ENCODE measurements at regions of chr20 and their contacts with region 1.

Region 1: GRCh38 chr20:20747298-20748085 is 35.0 kb upstream of the RALGAPA2 start:
- DNase-seq: no peak
- H3K4me3 ChIP-seq: no peak overlapping the region
- H3K27ac ChIP-seq: no peak overlapping the region
- H3K4me1 ChIP-seq: no peaks in the 10 kb centered on the region
- H3K27me3 ChIP-seq: no peaks in the 10 kb centered on the region
- CTCF ChIP-seq: no peak

Region 2: GRCh38 chr20:20699144-20699543 is 48.3 kb before region 1 on chr20:
- CTCF ChIA-PET with region 1: no interaction called
- dilution Hi-C with region 1: loop called (anchors 5 kb)
- in situ Hi-C with region 1: no loop called
- intact Hi-C with region 1: no loop called
- DNase-seq: no peak
- H3K4me3 ChIP-seq: no peak overlapping the region
- H3K27ac ChIP-seq: no peak overlapping the region
- H3K4me1 ChIP-seq: no peaks in the 10 kb centered on the region
- H3K27me3 ChIP-seq: no peaks in the 10 kb centered on the region
- CTCF ChIP-seq: no peak

Region 3: DNA sequence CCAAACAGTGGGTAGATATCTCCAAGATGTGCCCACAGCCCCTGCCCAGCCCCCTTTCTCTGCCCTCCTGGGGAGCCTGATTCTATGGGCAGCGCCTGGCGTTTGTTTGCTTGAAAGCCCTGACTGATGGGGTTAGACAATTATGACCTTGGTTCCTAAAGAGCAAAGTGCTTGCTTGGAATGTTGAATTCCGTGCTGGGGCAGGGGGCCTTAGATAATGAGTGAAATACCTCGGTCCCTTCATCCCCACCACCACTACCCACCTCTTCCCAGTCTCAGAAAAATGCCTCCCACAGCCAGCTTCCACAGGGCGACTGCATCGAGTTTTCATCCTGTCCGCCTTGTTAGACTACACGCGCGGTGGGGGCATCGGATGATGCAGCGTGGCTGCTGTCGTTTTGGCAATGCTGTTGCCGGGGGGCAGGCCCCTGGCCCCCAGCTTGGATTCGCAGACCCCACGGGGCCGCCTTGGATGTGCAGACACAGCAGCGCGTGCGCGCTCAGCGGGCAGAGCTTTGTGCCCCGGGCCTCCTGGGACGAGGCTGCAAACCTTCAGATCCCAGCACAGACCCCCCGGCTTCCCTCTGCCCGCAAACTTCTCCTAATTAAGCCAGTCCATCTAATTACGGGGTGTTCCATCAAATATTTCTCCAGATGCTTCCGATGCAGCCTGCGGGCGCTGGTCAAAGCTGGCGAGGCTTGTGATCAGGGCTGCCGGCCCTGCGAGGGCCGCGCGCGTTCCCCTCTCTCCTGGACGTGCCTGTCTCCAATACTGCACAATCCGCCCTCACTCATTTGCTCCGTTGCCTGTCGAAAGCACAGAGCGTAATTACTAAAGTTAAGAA is 272.5 kb after region 1 on chr20:
- CTCF ChIA-PET with region 1: no interaction called
- dilution Hi-C with region 1: no loop called
- in situ Hi-C with region 1: no loop called
- intact Hi-C with region 1: no loop called
- DNase-seq: no peak
- H3K4me3 ChIP-seq: no peak overlapping the region
- H3K27ac ChIP-seq: no peak overlapping the region
- H3K4me1 ChIP-seq: no peaks in the 10 kb centered on the region
- H3K27me3 ChIP-seq: peaks cover 11% of the 10 kb centered on the region
- CTCF ChIP-seq: no peak